Ovary (tissue), 10 donors: ENCODE measurements at regions of chr22 and their contacts with region 1.

Region 1: GRCh38 chr22:19854778-19855503 is at the starts of genes GNB1L and RTL10:
- DNase-seq: peak; percentile 97 to 99 (median 97)
- H3K4me3 ChIP-seq: peak within 1 kb of the TSS; percentile 92
- H3K27ac ChIP-seq: peak within 1 kb of the TSS; percentile 73 to 85
- H3K4me1 ChIP-seq: peaks cover 12% of the 10 kb centered on the region
- H3K27me3 ChIP-seq: no peaks in the 10 kb centered on the region
- CTCF ChIP-seq: peak in 1 of 3 donors; percentile 14
- EP300 ChIP-seq: no peak
- POLR2A ChIP-seq: peak; percentile 86
- total RNA-seq, gene GNB1L: 3.1 to 14.9 (median 6.0) TPM
- total RNA-seq, gene RTL10: 9.1 to 54.3 (median 16.7) TPM

Region 2: GRCh38 chr22:19891317-19892256 is 36.6 kb after region 1 on chr22:
- intact Hi-C with region 1: loop called in 1 of 4 experiments (anchors 5 kb)
- DNase-seq: peak in 1 of 5 donors; percentile 52
- H3K4me3 ChIP-seq: no peak overlapping the region
- H3K27ac ChIP-seq: peak overlapping the region in 1 of 2 donors; percentile 62
- H3K4me1 ChIP-seq: peaks cover 12% of the 10 kb centered on the region
- H3K27me3 ChIP-seq: no peaks in the 10 kb centered on the region
- CTCF ChIP-seq: no peak
- EP300 ChIP-seq: no peak
- POLR2A ChIP-seq: no peak

Region 3: GRCh38 chr22:19941365-19942082 is 86.6 kb after region 1 on chr22 and contains the starts of genes COMT and TXNRD2:
- intact Hi-C with region 1: loop called in 1 of 4 experiments (anchors 5 kb)
- DNase-seq: peak; percentile 69 to 86 (median 80)
- H3K4me3 ChIP-seq: peak within 1 kb of the TSS; percentile 75
- H3K27ac ChIP-seq: peak within 1 kb of the TSS; percentile 97 to 98
- H3K4me1 ChIP-seq: peaks cover 16% of the 10 kb centered on the region
- H3K27me3 ChIP-seq: no peaks in the 10 kb centered on the region
- CTCF ChIP-seq: no peak
- EP300 ChIP-seq: no peak
- POLR2A ChIP-seq: peak; percentile 66
- total RNA-seq, gene COMT: 143 to 194 (median 161) TPM
- total RNA-seq, gene TXNRD2: 21.3 to 37.3 (median 26.9) TPM